ENCODE measurements at regions of chr4 and their contacts with region 1.

Region 1: GRCh38 chr4:48779998-48780742 is at the start of gene FRYL:
- DNase-seq: peak; percentile 94 to 99 (median 96)
- ATAC-seq: peak; percentile 85
- H3K4me3 ChIP-seq: peak within 1 kb of the TSS; percentile 57 to 80
- H3K4me3 Mint-ChIP-seq: peak within 1 kb of the TSS; percentile 91
- H3K27ac ChIP-seq: peak within 1 kb of the TSS; percentile 73 to 84
- H3K27ac Mint-ChIP-seq: peak within 1 kb of the TSS; percentile 93
- H3K4me1 ChIP-seq: peaks cover 35% of the 10 kb centered on the region
- H3K4me1 Mint-ChIP-seq: peaks cover 47% of the 10 kb centered on the region
- H3K27me3 ChIP-seq: no peaks in the 10 kb centered on the region
- H3K27me3 Mint-ChIP-seq: no peaks in the 10 kb centered on the region
- CTCF ChIP-seq: no peak
- total RNA-seq, gene FRYL: 62.9 to 66.7 TPM

Region 2: DNA sequence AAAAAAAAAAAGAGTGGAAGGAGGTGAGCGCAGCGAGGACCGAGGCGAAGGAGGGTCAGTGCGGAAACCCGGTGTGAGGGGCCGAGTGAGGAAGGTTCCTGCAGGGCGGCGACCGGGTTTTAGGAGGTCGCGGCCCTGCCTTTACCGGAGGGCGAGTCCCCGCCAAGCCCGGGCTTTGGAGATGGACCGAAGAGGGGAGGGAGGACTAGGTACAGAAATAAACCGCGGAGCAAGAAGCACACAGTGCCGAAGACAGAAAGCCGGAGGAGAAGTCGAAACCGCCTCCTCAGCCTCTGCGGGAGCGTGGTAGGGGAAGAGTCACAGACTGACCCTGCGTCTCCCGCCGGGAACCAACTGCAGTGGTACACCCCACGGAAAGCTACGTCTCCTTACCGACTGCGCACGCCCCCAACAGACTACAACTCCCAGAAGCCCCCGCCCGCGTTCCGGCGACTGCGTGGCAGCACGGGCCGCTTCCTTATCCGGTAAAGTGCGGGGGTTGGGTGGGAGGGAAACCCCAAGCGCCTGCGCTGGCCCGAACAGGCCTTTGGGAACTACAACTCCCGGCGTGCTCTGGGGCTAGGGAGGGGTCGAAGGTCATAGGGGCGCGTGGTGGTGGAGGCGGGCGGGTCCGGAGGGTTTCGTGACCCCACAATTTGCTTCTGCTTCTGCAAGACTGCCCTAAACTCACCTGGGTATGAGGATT is 865.8 kb before region 1 on chr4 and contains the start of gene NFXL1:
- CTCF ChIA-PET with region 1: no interaction called
- POLR2A ChIA-PET with region 1: no interaction called
- intact Hi-C with region 1: loop called in 1 of 2 experiments (anchors 1 kb)
- DNase-seq: peak; percentile 90 to 97 (median 96)
- ATAC-seq: peak; percentile 95
- H3K4me3 ChIP-seq: peak within 1 kb of the TSS; percentile 99 to 100
- H3K4me3 Mint-ChIP-seq: peak within 1 kb of the TSS; percentile 99
- H3K27ac ChIP-seq: peak within 1 kb of the TSS; percentile 81 to 86
- H3K27ac Mint-ChIP-seq: peak within 1 kb of the TSS; percentile 97
- H3K4me1 ChIP-seq: peaks cover 22% of the 10 kb centered on the region
- H3K4me1 Mint-ChIP-seq: peaks cover 32% of the 10 kb centered on the region
- H3K27me3 ChIP-seq: no peaks in the 10 kb centered on the region
- H3K27me3 Mint-ChIP-seq: no peaks in the 10 kb centered on the region
- CTCF ChIP-seq: no peak
- total RNA-seq, gene NFXL1: 6.5 to 8.1 TPM

Region 3: GRCh38 chr4:48190839-48191238 is 589.3 kb before region 1 on chr4:
- CTCF ChIA-PET with region 1: no interaction called
- POLR2A ChIA-PET with region 1: no interaction called
- intact Hi-C with region 1: no loop called
- DNase-seq: no peak
- ATAC-seq: no peak
- H3K4me3 ChIP-seq: no peak overlapping the region
- H3K4me3 Mint-ChIP-seq: no peak overlapping the region
- H3K27ac ChIP-seq: no peak overlapping the region
- H3K27ac Mint-ChIP-seq: no peak overlapping the region
- H3K4me1 ChIP-seq: no peaks in the 10 kb centered on the region
- H3K4me1 Mint-ChIP-seq: peaks cover 6% of the 10 kb centered on the region
- H3K27me3 ChIP-seq: no peaks in the 10 kb centered on the region
- H3K27me3 Mint-ChIP-seq: no peaks in the 10 kb centered on the region
- CTCF ChIP-seq: no peak

Region 4: GRCh38 chr4:48578132-48578968 is 201.8 kb before region 1 on chr4:
- CTCF ChIA-PET with region 1: interaction called, 30 read pairs
- POLR2A ChIA-PET with region 1: no interaction called
- intact Hi-C with region 1: loop called (anchors 1 to 5 kb)
- DNase-seq: peak in 8 of 9 experiments; percentile 9 to 78 (median 48)
- ATAC-seq: peak; percentile 98
- H3K4me3 ChIP-seq: no peak overlapping the region
- H3K4me3 Mint-ChIP-seq: no peak overlapping the region
- H3K27ac ChIP-seq: no peak overlapping the region
- H3K27ac Mint-ChIP-seq: peak overlapping the region; percentile 7
- H3K4me1 ChIP-seq: no peaks in the 10 kb centered on the region
- H3K4me1 Mint-ChIP-seq: peaks cover 3% of the 10 kb centered on the region
- H3K27me3 ChIP-seq: no peaks in the 10 kb centered on the region
- H3K27me3 Mint-ChIP-seq: no peaks in the 10 kb centered on the region
- CTCF ChIP-seq: peak; percentile 87

Region 5: DNA sequence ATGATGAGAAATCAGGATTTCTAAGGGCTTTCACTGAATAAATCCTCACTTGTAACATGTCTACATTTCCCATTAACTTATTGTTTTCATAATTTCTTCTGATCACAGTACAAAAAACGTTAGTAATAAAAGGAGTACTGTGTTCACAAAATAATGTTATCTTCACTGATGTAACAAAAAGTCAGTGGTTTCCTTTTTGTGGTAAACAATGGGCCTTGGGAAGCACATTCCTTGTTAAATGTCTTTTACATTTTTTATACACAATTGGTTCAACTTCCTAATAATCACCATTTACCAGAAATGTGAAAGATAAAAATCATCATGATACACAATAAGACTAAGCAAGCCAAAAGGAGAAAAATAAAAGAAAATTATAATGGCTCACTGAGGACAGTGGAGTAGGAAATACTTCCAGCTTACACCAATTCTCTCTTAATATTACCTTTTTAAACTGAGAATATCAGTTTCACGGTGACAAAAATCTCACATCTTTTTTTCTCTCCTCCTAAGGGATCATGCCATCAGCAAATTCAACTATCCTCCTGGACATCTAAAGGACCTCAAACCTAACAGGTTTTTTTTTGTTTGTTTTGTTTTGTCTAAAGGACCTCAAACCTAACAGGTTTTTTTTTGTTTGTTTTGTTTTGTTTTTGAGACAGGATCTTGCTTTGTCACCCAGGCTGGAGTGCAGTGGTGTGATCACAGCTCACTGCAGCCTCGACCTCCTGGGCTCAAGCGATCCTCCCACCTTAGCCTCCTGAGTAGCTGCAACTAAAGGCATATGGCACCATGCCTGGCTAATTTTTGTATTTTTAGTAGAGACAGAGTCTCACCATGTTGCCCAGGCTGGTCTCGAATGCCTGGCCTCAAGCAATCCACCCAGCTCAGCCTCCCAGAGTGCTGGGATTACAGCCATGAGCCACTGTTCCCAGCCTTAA is 57.4 kb before region 1 on chr4:
- CTCF ChIA-PET with region 1: no interaction called
- POLR2A ChIA-PET with region 1: interaction called, 3 read pairs
- intact Hi-C with region 1: loop called in 1 of 2 experiments (anchors 10 kb)
- DNase-seq: no peak
- ATAC-seq: no peak
- H3K4me3 ChIP-seq: no peak overlapping the region
- H3K4me3 Mint-ChIP-seq: no peak overlapping the region
- H3K27ac ChIP-seq: no peak overlapping the region
- H3K27ac Mint-ChIP-seq: peak overlapping the region; percentile 63
- H3K4me1 ChIP-seq: peaks cover 31% of the 10 kb centered on the region
- H3K4me1 Mint-ChIP-seq: peaks cover 76% of the 10 kb centered on the region
- H3K27me3 ChIP-seq: no peaks in the 10 kb centered on the region
- H3K27me3 Mint-ChIP-seq: no peaks in the 10 kb centered on the region
- CTCF ChIP-seq: no peak

Region 6: DNA sequence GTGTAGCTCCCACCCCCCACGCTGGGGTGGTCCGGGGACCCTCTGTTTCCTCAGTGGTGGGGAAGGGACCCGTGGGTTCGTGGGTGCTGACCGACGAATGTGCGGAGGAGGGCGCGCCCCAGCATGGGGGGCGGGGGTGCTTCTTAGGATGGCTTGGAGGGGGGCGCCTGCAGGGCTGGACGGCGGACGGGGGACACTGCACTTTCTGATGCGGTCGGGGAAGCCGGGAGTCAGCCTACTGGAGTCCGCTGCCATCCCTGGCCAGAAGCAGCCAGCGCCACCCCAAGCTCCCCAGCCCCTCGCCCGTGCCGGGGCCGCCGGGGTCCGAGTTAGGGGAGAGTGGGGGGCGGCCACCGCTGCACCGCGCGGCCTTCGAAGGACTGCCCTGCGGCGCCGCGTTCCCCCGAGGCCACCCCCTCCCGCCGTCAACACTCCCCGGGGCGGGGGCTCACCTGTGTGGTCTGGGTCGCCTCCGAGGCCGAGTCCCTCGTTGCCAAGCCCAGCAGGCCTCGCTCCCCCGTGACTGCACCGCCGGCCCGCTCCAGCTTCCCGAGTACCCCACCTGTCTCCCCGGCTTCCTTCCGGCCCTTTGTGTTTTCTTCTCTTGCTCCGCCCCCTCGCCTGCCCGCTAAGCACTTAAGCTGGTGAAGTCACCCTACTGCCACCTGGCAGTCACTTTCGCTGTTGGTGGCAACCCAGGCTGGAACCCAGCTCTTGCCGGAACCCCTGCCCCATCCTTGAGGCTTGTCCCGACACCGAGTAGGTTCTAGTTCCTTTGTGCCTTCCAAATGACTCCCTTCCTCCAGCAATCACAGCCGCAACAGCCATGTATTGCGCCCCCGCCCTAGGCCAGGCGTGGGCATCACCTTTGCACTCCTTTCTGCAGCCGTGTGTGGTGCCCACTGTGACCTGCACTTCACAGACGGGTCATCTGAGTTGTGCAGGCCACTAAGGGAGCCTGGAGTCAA is 126.3 kb after region 1 on chr4 and contains the start of gene OCIAD2:
- CTCF ChIA-PET with region 1: interaction called, 3 read pairs
- POLR2A ChIA-PET with region 1: interaction called, 10 read pairs
- intact Hi-C with region 1: loop called (anchors 1 to 2 kb)
- DNase-seq: peak; percentile 70 to 92 (median 89)
- ATAC-seq: peak; percentile 97
- H3K4me3 ChIP-seq: peak within 1 kb of the TSS; percentile 73 to 82
- H3K4me3 Mint-ChIP-seq: peak within 1 kb of the TSS; percentile 98
- H3K27ac ChIP-seq: peak within 1 kb of the TSS; percentile 64 to 71
- H3K27ac Mint-ChIP-seq: peak within 1 kb of the TSS; percentile 98
- H3K4me1 ChIP-seq: peaks cover 29% of the 10 kb centered on the region
- H3K4me1 Mint-ChIP-seq: peaks cover 49% of the 10 kb centered on the region
- H3K27me3 ChIP-seq: no peaks in the 10 kb centered on the region
- H3K27me3 Mint-ChIP-seq: no peaks in the 10 kb centered on the region
- CTCF ChIP-seq: peak; percentile 36
- total RNA-seq, gene OCIAD2: 70.6 to 72.1 TPM